Astrocyte of the cerebellum (primary cell): ENCODE measurements at regions of chr6 and their contacts with region 1.

Region 1: DNA sequence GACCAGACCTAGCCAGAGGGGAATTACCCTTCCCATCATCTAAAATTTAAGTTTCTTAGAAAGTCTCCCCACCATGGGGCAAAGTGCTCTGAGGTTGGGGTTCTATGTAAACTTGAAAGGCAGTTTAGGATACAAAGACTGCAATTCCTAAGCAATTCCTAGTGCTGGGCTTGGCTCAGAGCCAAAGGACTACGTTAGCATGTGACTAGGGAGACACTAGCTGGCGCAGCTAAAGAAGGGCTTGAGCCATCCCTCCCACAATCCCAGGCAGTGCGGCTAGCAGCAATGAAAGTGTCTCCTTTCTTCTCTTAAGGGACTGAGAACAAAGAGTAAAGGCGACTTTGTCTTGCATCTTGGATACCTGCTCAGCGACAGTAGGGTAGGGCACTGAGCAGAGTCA is 306.6 kb upstream of the FKBP1C start:
- DNase-seq: no peak
- H3K4me3 ChIP-seq: no peak overlapping the region
- CTCF ChIP-seq: no peak

Region 2: GRCh38 chr6:62570372-62570771 is 334.3 kb before region 1 on chr6:
- in situ Hi-C with region 1: no loop called
- DNase-seq: no peak
- H3K4me3 ChIP-seq: no peak overlapping the region
- CTCF ChIP-seq: no peak

Region 3: DNA sequence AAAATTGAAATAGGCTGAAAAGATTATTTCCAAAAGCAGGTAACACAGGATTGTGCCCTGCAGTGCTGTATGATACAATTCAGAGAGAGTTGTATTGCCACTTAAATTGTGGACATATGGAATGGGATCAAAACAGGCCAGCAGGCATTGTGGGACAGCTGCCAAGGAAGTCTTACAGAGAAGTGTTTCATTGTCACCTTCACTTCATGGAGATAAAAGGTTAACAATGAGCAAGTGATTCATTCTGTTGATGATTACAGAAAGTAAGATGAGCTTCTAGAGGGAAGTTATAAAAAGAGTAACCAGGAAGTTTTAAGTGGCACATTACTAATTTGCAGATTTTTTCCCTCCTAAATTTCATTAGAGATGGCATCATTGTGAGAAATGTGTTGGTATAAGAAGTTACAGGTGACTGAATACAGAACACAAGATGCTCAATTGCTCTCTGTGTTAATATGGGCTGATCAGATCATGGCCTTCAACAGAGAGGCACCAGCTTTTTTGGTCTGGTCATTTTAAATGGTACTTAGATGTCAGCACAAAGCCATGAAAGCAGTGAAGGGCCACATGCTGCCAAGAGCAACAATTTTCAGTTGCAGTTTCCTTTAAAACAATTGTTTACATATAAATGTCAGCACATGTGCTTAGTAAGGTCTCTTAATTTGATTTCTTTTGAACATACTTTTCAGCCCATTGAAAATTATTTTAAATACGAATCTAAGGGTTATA is 95.9 kb before region 1 on chr6:
- in situ Hi-C with region 1: loop called (anchors 25 kb)
- DNase-seq: no peak
- H3K4me3 ChIP-seq: no peak overlapping the region
- CTCF ChIP-seq: no peak